A549 (cell line): ENCODE measurements at regions of chr17 and their contacts with region 1.

Region 1: DNA sequence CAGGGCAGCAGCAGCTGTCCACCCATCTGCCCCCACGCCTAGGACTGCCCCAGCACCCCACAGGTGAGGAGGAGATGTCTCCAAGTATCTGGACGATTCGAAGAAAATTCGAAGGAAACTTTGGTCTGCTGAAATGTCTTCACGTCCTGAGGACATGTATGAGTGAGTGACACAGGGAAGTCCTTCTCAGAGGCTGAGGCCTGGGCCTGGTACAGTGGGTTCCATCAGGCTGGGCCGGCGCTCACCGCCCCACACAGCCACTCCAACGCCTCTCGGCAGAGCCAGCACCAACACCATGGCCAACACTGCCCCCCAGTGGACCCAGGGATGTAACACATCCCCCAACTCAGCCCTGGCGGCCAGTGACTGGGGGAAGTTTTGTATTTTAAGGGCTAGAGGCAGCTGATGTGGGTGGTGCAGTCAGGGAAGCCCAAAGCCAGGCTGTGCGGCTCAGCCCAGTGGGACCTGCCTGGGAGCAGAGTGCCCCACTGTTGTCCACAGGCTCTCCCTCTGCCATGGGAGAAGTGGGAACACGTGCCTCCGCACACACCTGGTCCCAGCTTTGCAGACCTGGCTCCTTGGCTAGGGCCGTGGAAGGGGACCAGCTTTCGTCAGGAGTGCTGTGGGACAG is 55.8 kb upstream of the FASN start:
- DNase-seq: peak; percentile 78 to 90
- ATAC-seq: peak; percentile 87 to 94
- H3K4me3 ChIP-seq: no peak overlapping the region
- H3K27ac ChIP-seq: no peak overlapping the region; a peak in 1 of 6 replicates
- H3K4me1 ChIP-seq: no peaks in the 10 kb centered on the region
- CTCF ChIP-seq: peak; percentile 84
- EP300 ChIP-seq: no peak
- POLR2A ChIP-seq: no peak
- RAD21 ChIP-seq: peak; percentile 90 to 91

Region 2: DNA sequence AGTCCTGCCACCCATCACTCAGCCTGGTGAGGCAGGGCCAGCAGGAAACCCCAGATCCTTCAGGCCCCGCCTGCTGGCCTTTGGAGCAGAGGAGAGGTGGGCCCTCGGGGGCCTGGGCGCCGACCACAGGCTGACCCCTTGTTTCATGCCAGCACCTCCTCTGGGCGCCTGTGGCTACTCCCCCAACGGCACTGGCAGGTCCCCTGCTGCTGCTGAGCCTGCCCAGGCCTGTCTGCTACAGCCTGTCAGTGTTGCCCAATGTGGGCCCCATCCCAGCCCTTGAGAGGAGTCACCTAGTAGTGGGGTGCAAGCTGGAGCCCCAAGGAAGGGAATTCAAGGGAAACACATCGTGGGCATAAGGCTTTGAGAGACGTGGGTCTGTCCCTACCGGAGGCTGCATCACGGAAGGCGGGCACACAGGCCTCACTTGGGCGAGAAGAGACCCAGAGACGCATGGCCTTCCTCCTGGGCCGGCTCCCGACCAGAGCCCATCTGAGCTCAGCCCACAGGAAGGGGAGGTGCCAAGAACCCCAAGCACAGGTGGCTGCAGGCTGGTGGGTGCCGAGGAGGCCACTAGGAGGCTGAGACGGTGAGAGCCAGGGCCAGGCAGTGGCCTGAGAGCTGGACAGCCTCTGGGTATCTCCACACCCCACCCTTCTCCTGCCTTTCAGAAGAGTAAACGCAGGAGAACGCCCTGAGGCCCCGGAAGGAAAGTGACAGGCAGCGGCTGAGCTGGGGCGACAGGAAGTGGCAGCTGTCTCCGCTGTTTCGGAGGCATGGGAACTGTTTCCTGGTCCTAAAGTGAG is 47.8 kb before region 1 on chr17:
- CTCF ChIA-PET with region 1: interaction called, 10 read pairs
- POLR2A ChIA-PET with region 1: no interaction called
- DNase-seq: peak; percentile 82 to 88
- ATAC-seq: peak; percentile 77 to 87
- H3K4me3 ChIP-seq: no peak overlapping the region
- H3K27ac ChIP-seq: peak overlapping the region; percentile 54 to 73
- H3K4me1 ChIP-seq: peaks cover 53% of the 10 kb centered on the region
- CTCF ChIP-seq: no peak
- EP300 ChIP-seq: no peak
- POLR2A ChIP-seq: peak; percentile 60
- RAD21 ChIP-seq: 0 out of 5 replicates have a peak, but pooled peaks of 1 of the 2 experiments have one; percentile 15